ENCODE measurements at regions of chr5 and their contacts with region 1.

Region 1: DNA sequence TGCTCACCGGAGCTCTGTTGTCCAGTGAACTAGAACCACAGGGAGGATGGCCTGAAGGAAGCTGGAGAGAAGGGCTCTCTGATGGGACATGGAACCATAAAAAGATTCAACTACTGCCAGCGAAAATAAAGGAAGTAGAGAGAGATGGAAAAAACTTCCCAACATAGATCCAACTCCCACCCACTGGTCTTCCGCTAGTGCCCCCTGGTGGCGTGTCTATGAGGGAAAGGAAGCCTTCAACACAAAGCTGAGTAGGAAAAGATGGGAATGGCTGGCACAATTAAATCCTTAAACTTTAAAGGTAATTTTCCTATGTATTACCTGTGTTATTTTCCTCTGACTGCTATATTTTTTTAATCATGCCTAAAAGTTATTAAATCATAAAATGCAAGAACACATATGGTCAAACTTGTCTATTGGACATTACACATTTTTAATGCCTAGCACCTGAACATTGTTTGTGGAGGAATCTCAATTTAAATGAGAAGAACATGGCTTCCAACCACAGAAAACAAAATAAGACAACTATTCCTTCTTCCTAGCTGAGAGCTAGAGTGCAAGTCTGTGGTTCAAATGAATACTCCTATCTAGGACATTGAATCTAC is 51.5 kb downstream of the CEP120 start:
- DNase-seq: peak; percentile 16
- H3K4me3 ChIP-seq: no peak overlapping the region
- H3K27ac ChIP-seq: no peak overlapping the region
- H3K4me1 ChIP-seq: no peaks in the 10 kb centered on the region
- H3K27me3 ChIP-seq: no peaks in the 10 kb centered on the region
- CTCF ChIP-seq: peak; percentile 53 to 63

Region 2: DNA sequence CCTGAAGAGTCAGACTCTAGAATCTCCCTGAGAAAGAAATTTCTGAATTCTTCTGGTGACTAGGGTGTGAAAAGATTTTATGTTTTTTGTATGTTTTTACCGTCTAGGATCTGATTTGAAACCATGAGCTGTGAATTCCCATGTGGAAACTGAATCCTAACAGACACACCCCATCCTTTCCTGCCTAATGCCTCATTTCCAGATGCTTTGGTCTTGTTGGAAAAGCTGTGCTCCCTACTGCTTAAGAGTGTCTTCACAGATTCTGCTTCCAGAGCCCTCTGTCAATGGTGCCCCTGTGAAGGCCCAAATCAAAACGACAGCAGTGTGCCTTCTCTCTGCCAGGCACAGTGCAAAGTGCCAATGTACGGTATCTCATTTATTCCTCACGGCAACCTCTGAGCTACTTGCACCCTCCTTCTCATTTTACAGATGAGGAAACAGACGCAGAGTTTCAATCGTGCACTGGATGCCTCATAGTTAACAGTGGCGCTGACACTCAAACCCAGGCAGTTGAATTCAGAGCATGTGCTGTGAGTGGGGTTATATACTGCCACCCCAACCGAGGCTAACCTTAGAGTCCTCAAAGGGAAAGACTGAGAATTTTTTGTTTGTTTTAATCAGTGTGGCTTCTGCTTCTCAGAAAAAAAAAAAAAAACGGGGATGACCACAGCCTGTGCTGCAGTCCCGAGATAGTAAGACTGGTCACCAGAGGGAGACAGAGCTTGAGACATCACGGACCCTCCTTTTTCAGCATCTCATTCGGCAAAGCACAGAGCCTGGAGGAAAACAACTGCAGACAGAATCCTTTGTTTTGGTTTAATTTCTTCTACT is 871.2 kb before region 1 on chr5:
- CTCF ChIA-PET with region 1: no interaction called
- dilution Hi-C with region 1: no loop called
- in situ Hi-C with region 1: loop called in 1 of 2 experiments (anchors 25 kb)
- intact Hi-C with region 1: loop called (anchors 2 kb)
- DNase-seq: peak; percentile 30
- H3K4me3 ChIP-seq: no peak overlapping the region
- H3K27ac ChIP-seq: no peak overlapping the region
- H3K4me1 ChIP-seq: no peaks in the 10 kb centered on the region
- H3K27me3 ChIP-seq: no peaks in the 10 kb centered on the region
- CTCF ChIP-seq: peak; percentile 49 to 62

Measured in mammary epithelial cell (primary cell).